IMR-90 (cell line): ENCODE measurements at regions of chr18 and their contacts with region 1.

Region 1: DNA sequence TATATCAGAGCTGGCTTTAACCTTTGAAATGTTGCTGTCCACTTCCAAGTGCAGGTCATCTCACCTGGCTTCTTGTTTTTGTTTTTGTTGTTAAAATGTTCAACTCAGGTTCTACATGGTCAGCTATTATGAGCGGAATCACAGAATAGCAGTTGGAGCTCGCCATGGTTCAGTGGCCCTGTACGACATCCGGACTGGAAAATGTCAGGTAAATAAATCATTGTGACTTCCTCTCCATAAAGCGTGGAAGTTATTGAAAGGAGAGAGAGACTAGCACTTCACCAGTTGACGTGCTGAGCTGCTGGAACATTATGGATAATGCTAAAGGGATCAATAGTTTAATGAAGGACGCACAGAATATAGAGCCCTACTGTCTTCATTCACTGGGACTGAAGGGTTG is 184.6 kb upstream of the BOD1L2 start:
- DNase-seq: no peak
- ATAC-seq: no peak
- H3K4me3 ChIP-seq: no peak overlapping the region
- H3K27ac ChIP-seq: no peak overlapping the region
- H3K4me1 ChIP-seq: peaks cover 2% of the 10 kb centered on the region
- H3K27me3 ChIP-seq: no peaks in the 10 kb centered on the region
- CTCF ChIP-seq: no peak
- POLR2A ChIP-seq: no peak
- RAD21 ChIP-seq: no peak

Region 2: GRCh38 chr18:56770873-56771272 is 191.4 kb before region 1 on chr18:
- CTCF ChIA-PET with region 1: no interaction called
- POLR2A ChIA-PET with region 1: no interaction called
- dilution Hi-C with region 1: no loop called
- in situ Hi-C with region 1: no loop called
- intact Hi-C with region 1: no loop called
- DNase-seq: peak; percentile 48
- ATAC-seq: peak; percentile 83
- H3K4me3 ChIP-seq: no peak overlapping the region
- H3K27ac ChIP-seq: no peak overlapping the region
- H3K4me1 ChIP-seq: peaks cover 2% of the 10 kb centered on the region
- H3K27me3 ChIP-seq: no peaks in the 10 kb centered on the region
- CTCF ChIP-seq: no peak
- POLR2A ChIP-seq: no peak
- RAD21 ChIP-seq: no peak

Region 3: GRCh38 chr18:56952026-56952425 is 10.3 kb before region 1 on chr18:
- CTCF ChIA-PET with region 1: no interaction called
- POLR2A ChIA-PET with region 1: no interaction called
- dilution Hi-C with region 1: no loop called
- in situ Hi-C with region 1: no loop called
- intact Hi-C with region 1: no loop called
- DNase-seq: no peak
- ATAC-seq: no peak
- H3K4me3 ChIP-seq: no peak overlapping the region
- H3K27ac ChIP-seq: no peak overlapping the region
- H3K4me1 ChIP-seq: no peaks in the 10 kb centered on the region; the same call in 1 of the 2 replicates
- H3K27me3 ChIP-seq: no peaks in the 10 kb centered on the region
- CTCF ChIP-seq: no peak
- POLR2A ChIP-seq: no peak
- RAD21 ChIP-seq: no peak

Region 4: GRCh38 chr18:56977309-56977708 is 15.0 kb after region 1 on chr18:
- CTCF ChIA-PET with region 1: no interaction called
- POLR2A ChIA-PET with region 1: no interaction called
- dilution Hi-C with region 1: no loop called
- in situ Hi-C with region 1: no loop called
- intact Hi-C with region 1: loop called (anchors 1 kb)
- DNase-seq: no peak
- ATAC-seq: no peak
- H3K4me3 ChIP-seq: no peak overlapping the region
- H3K27ac ChIP-seq: no peak overlapping the region
- H3K4me1 ChIP-seq: no peaks in the 10 kb centered on the region
- H3K27me3 ChIP-seq: no peaks in the 10 kb centered on the region
- CTCF ChIP-seq: no peak
- POLR2A ChIP-seq: no peak
- RAD21 ChIP-seq: no peak

Region 5: DNA sequence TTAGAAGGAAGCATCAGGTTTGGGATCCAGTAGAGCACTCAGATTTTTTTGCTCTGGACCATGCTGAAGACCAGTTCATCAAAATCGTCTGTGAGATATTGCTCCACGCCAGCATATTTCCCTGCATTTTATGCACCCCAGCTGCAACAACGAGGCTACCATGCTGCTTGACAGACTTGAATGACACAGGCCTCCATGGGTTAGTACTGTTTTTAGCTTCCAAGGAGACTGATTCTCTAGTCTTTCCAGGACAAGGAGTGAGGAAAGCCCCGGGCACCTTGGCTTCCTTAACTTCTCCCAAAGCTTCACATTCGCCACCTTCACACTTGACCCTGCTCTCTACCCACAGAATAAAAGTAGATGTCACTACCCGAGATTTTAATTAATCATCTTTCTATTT is 202.1 kb after region 1 on chr18:
- CTCF ChIA-PET with region 1: no interaction called
- POLR2A ChIA-PET with region 1: no interaction called
- dilution Hi-C with region 1: no loop called
- in situ Hi-C with region 1: no loop called
- intact Hi-C with region 1: no loop called
- DNase-seq: no peak
- ATAC-seq: no peak
- H3K4me3 ChIP-seq: no peak overlapping the region
- H3K27ac ChIP-seq: no peak overlapping the region
- H3K4me1 ChIP-seq: no peaks in the 10 kb centered on the region
- H3K27me3 ChIP-seq: no peaks in the 10 kb centered on the region
- CTCF ChIP-seq: no peak
- POLR2A ChIP-seq: no peak
- RAD21 ChIP-seq: no peak